ENCODE measurements at regions of chr14 and their contacts with region 1.

Region 1: GRCh38 chr14:31945074-31945613 is 132.0 kb upstream of the ARHGAP5 start:
- DNase-seq: peak in 8 of 9 donors; percentile 7 to 75 (median 48)
- ATAC-seq: peak; percentile 83
- H3K4me3 ChIP-seq: peak overlapping the region; percentile 29
- H3K4me3 Mint-ChIP-seq: peak overlapping the region in 9 of 10 donors; percentile 30 to 84 (median 71)
- H3K27ac ChIP-seq: peak overlapping the region; percentile 56
- H3K27ac Mint-ChIP-seq: peak overlapping the region; percentile 62 to 94 (median 90)
- H3K4me1 ChIP-seq: peaks cover 10 to 28% of the 10 kb centered on the region in 2 donors
- H3K4me1 Mint-ChIP-seq: peaks cover 21 to 64% (median 33%) of the 10 kb centered on the region in 7 donors
- H3K27me3 ChIP-seq: no peaks in the 10 kb centered on the region
- H3K27me3 Mint-ChIP-seq: peaks cover 0 to 4% (median 0%) of the 10 kb centered on the region in 5 donors

Region 2: GRCh38 chr14:31456841-31457664 is 488.1 kb before region 1 on chr14 and contains the start of gene DTD2:
- CTCF ChIA-PET with region 1: no interaction called
- POLR2A ChIA-PET with region 1: interaction called, 3 read pairs
- intact Hi-C with region 1: loop called in 1 of 2 experiments (anchors 5 kb)
- DNase-seq: peak; percentile 80 to 89 (median 86)
- ATAC-seq: peak; percentile 99
- H3K4me3 ChIP-seq: peak within 1 kb of the TSS; percentile 82
- H3K4me3 Mint-ChIP-seq: peak within 1 kb of the TSS; percentile 92 to 98 (median 96)
- H3K27ac ChIP-seq: peak within 1 kb of the TSS; percentile 77
- H3K27ac Mint-ChIP-seq: peak within 1 kb of the TSS; percentile 89 to 98 (median 95)
- H3K4me1 ChIP-seq: peaks cover 6% of the 10 kb centered on the region in 2 donors
- H3K4me1 Mint-ChIP-seq: peaks cover 14 to 48% (median 40%) of the 10 kb centered on the region in 7 donors
- H3K27me3 ChIP-seq: no peaks in the 10 kb centered on the region
- H3K27me3 Mint-ChIP-seq: peaks cover 0 to 5% (median 0%) of the 10 kb centered on the region in 5 donors
- total RNA-seq, gene DTD2: 13.4 to 20.2 (median 18.6) TPM

Region 3: DNA sequence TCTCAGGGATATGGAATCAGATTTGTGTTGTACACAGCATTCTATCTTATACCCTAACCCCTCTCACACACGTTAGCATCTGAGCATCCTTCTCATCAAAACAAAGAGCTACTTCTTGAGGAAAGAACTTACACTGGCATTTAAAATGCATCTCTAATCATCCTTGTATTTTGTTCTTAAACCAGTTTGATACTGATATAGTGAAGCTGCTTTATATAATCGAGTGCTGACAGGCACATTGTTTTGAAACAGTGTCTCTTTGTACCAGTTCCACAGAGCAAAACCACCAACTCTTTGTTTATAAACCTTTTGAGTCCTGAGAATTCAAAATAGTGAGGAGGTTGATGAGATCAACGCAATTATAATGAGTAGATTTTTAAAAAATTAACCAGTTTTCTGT is 466.1 kb before region 1 on chr14:
- CTCF ChIA-PET with region 1: no interaction called
- POLR2A ChIA-PET with region 1: no interaction called
- intact Hi-C with region 1: no loop called
- DNase-seq: no peak
- ATAC-seq: no peak
- H3K4me3 ChIP-seq: no peak overlapping the region
- H3K4me3 Mint-ChIP-seq: no peak overlapping the region
- H3K27ac ChIP-seq: no peak overlapping the region
- H3K27ac Mint-ChIP-seq: no peak overlapping the region
- H3K4me1 ChIP-seq: no peaks in the 10 kb centered on the region
- H3K4me1 Mint-ChIP-seq: no peaks in the 10 kb centered on the region
- H3K27me3 ChIP-seq: no peaks in the 10 kb centered on the region
- H3K27me3 Mint-ChIP-seq: peaks cover 0 to 30% (median 4%) of the 10 kb centered on the region in 5 donors

Measured in naive thymus-derived CD4-positive, alpha-beta T cell (primary cell).